ENCODE measurements at regions of chr5 and their contacts with region 1.

Region 1: DNA sequence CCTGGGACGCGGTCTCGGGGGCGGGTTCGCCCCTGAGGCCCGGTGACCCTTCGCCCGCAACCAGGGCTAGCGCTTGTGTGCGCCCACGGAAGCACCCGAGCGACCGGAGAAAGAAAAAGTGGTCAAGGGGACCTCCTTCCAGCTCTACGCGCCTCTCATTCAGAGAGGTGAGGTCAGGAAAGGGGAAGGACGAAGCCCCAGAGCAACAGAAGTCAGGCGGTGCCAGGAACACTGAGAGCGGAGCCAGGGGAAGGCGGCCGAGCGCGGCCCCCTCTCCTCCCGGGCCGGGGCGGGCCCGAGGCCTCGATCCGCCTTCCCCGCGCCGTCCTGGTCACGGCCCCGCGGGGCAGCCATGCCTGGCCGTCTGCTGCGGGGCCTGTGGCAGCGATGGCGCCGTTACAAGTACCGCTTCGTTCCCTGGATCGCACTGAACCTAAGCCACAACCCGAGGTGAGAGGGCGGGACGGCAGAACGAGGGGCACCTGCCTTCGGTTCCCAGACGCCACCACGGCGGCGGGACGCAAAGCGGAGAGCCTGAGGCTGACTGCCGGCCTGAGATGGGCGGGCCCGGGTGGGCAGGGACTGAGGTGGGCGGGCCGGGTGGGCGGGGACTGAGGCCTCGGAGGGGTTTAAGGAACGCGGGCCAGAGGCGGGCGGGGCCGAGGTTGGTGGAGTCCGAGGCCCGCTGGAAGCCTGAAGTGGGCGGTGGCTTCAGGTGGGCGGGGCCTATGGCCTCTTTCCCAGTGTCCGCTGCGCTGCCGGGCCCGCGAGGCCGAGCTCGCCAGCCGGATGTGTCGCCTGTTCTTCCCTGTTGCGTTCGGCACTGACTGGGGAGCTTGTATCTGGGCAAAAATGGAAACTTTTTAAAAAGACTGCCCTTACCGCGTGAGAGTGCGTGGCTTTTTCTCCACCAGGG is at the start of gene SETD9:
- DNase-seq: peak; percentile 95 to 96
- H3K4me3 ChIP-seq: peak within 1 kb of the TSS; percentile 64 to 87 (median 79)
- H3K27ac ChIP-seq: peak within 1 kb of the TSS; percentile 93
- H3K4me1 ChIP-seq: peaks cover 0 to 11% (median 5%) of the 10 kb centered on the region in 4 experiments; a peak in 5 of 7 replicates
- H3K27me3 ChIP-seq: no peaks in the 10 kb centered on the region
- CTCF ChIP-seq: no peak
- EP300 ChIP-seq: no peak
- POLR2A ChIP-seq: peak; percentile 89 to 96
- RAD21 ChIP-seq: no peak
- total RNA-seq, gene SETD9: 11.9 and 13.3 TPM in 2 replicates

Region 2: GRCh38 chr5:56950626-56951125 is 41.1 kb after region 1 on chr5:
- CTCF ChIA-PET with region 1: interaction called, 3 read pairs
- POLR2A ChIA-PET with region 1: interaction called, 30 read pairs
- DNase-seq: peak in 1 of 2 experiments; percentile 72
- H3K4me3 ChIP-seq: peak overlapping the region; percentile 59 to 89 (median 82)
- H3K27ac ChIP-seq: no peak overlapping the region
- H3K4me1 ChIP-seq: peaks cover 0 to 5% (median 2%) of the 10 kb centered on the region in 4 experiments; a peak in 3 of 7 replicates
- H3K27me3 ChIP-seq: peaks cover 0 to 7% (median 2%) of the 10 kb centered on the region in 4 experiments; a peak in 3 of 7 replicates
- CTCF ChIP-seq: no peak
- EP300 ChIP-seq: no peak
- POLR2A ChIP-seq: peak in 1 of 2 experiments; percentile 59; a peak in 2 of 3 replicates
- RAD21 ChIP-seq: 0 out of 4 replicates have a peak, but pooled peaks of 1 of the 2 experiments have one; percentile 0

Region 3: GRCh38 chr5:57173185-57174127 is 263.9 kb after region 1 on chr5 and contains the start of gene GPBP1:
- CTCF ChIA-PET with region 1: no interaction called
- POLR2A ChIA-PET with region 1: interaction called, 15 read pairs
- DNase-seq: peak; percentile 91 to 97
- H3K4me3 ChIP-seq: peak within 1 kb of the TSS; percentile 94 to 99 (median 96)
- H3K27ac ChIP-seq: peak within 1 kb of the TSS; percentile 99
- H3K4me1 ChIP-seq: peaks cover 0 to 3% (median 1%) of the 10 kb centered on the region in 4 experiments; a peak in 2 of 7 replicates
- H3K27me3 ChIP-seq: no peaks in the 10 kb centered on the region
- CTCF ChIP-seq: no peak
- EP300 ChIP-seq: peak in 1 of 2 experiments; percentile 71; a peak in 1 of 3 replicates
- POLR2A ChIP-seq: peak; percentile 60 to 86; a peak in 2 of 3 replicates
- RAD21 ChIP-seq: no peak
- total RNA-seq, gene GPBP1: 104 and 108 TPM in 2 replicates